ENCODE measurements at regions of chr3 and their contacts with region 1.

Region 1: DNA sequence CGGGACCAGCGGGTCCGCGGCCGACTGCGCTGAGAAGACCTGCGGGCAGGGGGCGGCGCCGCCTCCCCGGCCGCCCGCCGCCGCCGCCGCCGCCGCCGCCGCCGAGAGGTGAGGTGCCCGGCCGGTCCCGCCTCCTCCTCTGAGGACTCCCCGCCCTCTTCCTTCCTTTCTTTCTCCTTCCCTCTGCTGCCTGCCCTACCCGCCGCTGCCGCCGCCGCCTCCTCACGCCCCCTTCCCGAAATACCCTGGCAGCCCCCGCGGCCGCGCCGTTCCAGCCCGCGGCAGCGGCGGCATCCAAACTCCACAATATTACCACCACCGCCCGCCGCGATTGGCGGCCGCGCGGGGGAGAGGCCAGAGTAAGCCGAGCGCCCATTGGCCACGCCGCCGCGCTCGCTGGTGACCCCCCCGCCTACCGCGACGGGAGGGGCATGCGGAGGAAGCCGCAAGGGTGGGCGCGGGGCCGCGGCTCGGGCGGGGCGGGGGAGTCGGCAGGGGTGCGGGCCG is 61.8 kb upstream of the ANKRD28 start:
- DNase-seq: peak; percentile 82
- H3K4me3 ChIP-seq: peak overlapping the region; percentile 79 to 99 (median 86)
- H3K27ac ChIP-seq: peak overlapping the region; percentile 17
- H3K4me1 ChIP-seq: peaks cover 16% of the 10 kb centered on the region
- H3K27me3 ChIP-seq: no peaks in the 10 kb centered on the region
- CTCF ChIP-seq: no peak
- POLR2A ChIP-seq: no peak

Region 2: GRCh38 chr3:15831930-15832329 is 27.6 kb before region 1 on chr3:
- CTCF ChIA-PET with region 1: no interaction called
- POLR2A ChIA-PET with region 1: no interaction called
- dilution Hi-C with region 1: no loop called
- intact Hi-C with region 1: no loop called
- DNase-seq: no peak
- H3K4me3 ChIP-seq: no peak overlapping the region
- H3K27ac ChIP-seq: no peak overlapping the region
- H3K4me1 ChIP-seq: no peaks in the 10 kb centered on the region
- H3K27me3 ChIP-seq: no peaks in the 10 kb centered on the region
- CTCF ChIP-seq: no peak
- POLR2A ChIP-seq: no peak

Region 3: DNA sequence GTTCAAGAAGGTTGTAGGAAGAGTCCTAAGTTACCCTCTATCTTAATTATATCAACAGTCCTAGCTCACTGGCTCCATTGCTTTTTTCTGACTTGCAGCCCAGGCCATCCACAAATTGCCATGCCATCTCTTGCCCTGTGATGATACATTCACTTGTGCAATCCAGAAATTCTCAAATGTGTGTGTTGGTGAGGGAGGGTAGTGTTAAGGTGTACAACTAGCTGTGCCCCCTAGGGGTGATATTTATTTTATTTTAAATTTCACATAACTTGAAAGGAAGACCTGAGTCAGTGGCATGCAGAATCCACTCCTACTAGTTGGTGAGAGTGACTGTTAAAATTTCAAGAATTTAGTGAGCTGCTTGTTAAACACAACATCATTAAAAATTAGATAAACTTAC is 94.3 kb after region 1 on chr3:
- CTCF ChIA-PET with region 1: no interaction called
- POLR2A ChIA-PET with region 1: no interaction called
- dilution Hi-C with region 1: no loop called
- intact Hi-C with region 1: loop called (anchors 5 kb)
- DNase-seq: no peak
- H3K4me3 ChIP-seq: no peak overlapping the region
- H3K27ac ChIP-seq: no peak overlapping the region
- H3K4me1 ChIP-seq: no peaks in the 10 kb centered on the region
- H3K27me3 ChIP-seq: no peaks in the 10 kb centered on the region
- CTCF ChIP-seq: no peak
- POLR2A ChIP-seq: no peak

Region 4: GRCh38 chr3:16247276-16248061 is 387.9 kb after region 1 on chr3:
- CTCF ChIA-PET with region 1: no interaction called
- POLR2A ChIA-PET with region 1: no interaction called
- dilution Hi-C with region 1: no loop called
- intact Hi-C with region 1: loop called (anchors 1 kb)
- DNase-seq: peak; percentile 72
- H3K4me3 ChIP-seq: no peak overlapping the region
- H3K27ac ChIP-seq: no peak overlapping the region
- H3K4me1 ChIP-seq: peaks cover 11% of the 10 kb centered on the region
- H3K27me3 ChIP-seq: no peaks in the 10 kb centered on the region
- CTCF ChIP-seq: peak; percentile 86 to 87
- POLR2A ChIP-seq: no peak